Dorsolateral prefrontal cortex (tissue), 120 donors: ENCODE measurements at regions of chr22 and their contacts with region 1.

Region 1: DNA sequence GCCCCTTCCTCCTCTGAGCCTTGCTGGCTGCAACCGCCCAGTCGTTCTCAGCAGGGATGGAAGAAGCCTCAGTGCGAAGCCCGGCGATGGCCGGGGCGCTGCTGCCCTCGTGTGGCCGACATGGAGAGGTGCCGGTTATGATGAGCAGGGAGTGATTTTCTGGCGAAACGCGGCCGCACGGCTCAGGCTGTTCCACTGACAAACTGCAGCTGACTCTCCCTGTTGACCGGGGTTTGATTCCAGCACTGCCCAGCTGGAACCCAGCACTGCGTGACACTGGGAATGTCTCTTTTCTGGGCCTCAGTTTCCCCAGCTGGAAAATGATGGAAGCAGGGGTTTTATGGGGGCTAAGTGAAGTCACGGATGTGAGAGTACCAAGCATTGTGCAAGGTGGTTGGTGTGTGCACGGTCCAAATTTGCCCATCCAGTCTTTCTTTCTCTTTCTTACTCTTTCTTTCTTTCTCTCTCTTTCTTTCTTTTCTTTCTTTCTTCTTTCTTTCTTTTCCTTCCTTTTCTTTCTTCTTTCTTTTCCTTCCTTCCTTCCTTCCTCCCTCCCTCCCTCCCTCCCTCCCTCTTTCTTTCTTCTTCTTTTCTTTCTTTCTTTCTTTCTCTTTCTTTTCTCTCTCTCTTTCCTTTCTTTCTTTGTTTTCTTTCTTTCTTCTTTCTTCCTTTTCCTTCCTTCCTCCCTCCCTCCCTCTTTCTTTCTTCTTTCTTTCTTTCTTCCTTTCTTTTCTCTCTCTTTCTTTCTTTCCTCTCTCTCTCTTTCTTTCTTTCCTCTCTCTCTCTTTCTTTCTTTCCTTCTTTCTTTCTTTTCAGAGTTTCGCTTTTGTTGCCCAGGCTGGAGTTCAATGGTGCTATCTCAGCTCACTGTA is 25.8 kb upstream of the MPPED1 start:
- DNase-seq: peak; percentile 60 to 89 (median 78)
- H3K4me3 ChIP-seq: peak overlapping the region in 40 of 59 donors; percentile 1 to 54 (median 26)
- H3K27ac ChIP-seq: peak overlapping the region in 1 of 59 donors; percentile 44
- H3K27me3 ChIP-seq: peaks cover 0 to 21% (median 0%) of the 10 kb centered on the region in 45 donors
- CTCF ChIP-seq: peak; percentile 76 to 98 (median 92)

Region 2: DNA sequence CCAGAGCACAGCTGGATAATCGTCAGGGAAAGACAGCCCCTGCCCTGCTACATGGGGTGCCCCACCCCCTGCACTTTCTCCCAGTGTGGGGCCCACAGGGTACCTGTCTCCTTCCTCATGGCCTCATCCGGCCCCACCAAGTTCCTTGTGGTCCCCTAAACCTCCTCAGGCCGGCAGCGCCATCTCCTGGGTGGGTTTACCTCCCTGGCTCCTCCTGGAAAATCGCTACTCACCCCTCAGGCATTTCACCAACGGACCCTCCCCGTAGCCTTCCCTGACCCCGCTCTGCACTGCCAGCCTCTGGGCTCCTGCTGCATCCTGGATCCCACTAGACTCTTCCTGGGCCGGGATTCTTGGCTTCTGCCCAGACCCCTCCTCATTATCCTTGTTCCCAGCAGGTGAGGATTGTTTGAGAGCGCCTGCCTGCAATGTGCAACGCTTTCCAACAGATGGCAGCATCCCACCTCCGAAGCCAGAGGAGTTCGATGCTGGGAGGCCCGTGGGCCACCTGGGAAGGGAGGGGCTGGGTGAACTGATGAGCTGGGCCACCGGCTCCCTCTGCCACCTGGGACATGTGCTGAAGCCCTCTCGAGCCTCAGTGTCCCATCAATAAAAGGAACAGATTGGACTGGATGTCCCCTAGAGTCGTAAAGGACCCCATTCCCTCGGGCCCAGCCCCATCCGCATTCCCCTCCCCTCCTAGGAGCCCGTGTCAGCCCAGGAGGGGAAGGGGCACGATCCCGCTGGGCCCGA is 154.9 kb before region 1 on chr22:
- intact Hi-C with region 1: loop called in 1 of 2 experiments (anchors 5 kb)
- DNase-seq: peak in 9 of 10 donors; percentile 31 to 67 (median 49)
- H3K4me3 ChIP-seq: no peak overlapping the region
- H3K27ac ChIP-seq: no peak overlapping the region
- H3K27me3 ChIP-seq: no peaks in the 10 kb centered on the region
- CTCF ChIP-seq: peak; percentile 47 to 91 (median 83)

Region 3: DNA sequence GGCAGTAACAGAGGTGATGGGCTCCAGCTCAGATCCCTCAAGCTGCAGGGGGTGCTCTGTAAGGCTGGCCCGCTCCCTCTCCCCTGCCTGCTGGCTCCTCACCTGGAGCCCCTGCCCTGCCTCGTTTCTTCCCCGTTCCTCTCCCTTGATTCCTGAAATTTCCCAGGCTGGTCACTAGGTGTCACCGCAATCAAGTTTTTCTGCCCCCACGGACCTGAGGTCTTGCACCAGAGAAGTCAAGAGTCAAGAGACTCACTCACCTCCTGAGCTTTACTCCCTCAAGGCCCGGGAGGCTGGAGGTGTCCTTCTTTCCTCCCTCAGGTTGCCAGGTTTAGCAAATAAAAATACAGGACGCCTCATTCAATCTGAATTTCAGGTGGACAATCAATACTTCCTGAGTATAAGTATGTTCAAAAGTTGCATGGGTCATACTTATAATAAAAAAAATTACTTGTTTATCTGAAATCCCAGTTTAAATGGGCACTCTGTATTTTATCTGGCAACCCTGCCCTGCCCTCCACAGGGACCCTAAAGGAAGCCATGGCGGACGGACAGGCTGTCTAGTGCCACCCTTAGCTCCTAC is 112.0 kb before region 1 on chr22:
- intact Hi-C with region 1: loop called (anchors 2 kb)
- DNase-seq: peak in 5 of 10 donors; percentile 10 to 58 (median 26)
- H3K4me3 ChIP-seq: no peak overlapping the region
- H3K27ac ChIP-seq: no peak overlapping the region
- H3K27me3 ChIP-seq: peaks cover 0 to 6% (median 0%) of the 10 kb centered on the region in 45 donors
- CTCF ChIP-seq: peak; percentile 37 to 81 (median 71)

Region 4: DNA sequence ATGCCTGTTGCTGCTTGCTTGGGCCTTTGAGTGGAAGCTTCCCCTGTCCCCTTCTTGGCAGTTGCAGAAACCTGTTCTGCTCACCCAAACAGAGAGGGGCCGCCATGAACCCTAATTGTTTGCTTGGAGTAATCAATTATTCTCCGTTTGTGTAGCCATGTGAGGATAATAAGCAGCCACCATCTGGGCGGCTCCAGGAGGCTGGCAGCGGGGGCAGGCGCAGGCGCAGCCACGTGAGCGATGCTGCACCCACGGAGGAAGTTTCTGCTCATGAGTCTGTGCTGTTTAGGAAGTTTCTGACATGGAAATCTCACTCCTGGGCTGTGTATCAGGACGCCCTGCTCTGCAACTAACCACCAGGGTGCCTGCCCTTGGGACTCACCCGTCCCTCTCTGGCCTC is 115.9 kb after region 1 on chr22:
- intact Hi-C with region 1: no loop called
- DNase-seq: peak in 6 of 10 donors; percentile 49 to 75 (median 68)
- H3K4me3 ChIP-seq: no peak overlapping the region
- H3K27ac ChIP-seq: peak overlapping the region in 39 of 59 donors; percentile 10 to 79 (median 57)
- H3K27me3 ChIP-seq: no peaks in the 10 kb centered on the region
- CTCF ChIP-seq: no peak

Region 5: DNA sequence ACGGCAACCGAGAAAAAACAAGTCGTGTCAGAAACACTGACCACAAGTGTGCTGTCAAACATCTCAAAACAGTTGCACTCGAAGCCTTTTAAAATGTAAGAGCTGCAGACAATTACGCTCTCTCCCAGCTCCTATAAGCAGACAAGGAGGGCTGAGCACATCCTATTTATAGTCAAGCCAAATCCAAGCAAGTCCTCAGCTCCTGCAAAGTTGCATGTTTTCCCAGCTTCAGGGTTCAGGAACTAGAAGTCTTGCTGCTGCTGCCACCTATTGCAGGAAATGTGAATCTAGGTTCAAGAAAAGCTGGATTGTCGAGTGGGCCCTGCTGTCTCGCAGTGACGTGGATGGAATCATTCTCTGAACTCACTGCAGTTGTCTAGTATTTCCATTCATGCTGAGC is 410.6 kb after region 1 on chr22:
- intact Hi-C with region 1: loop called in 1 of 2 experiments (anchors 5 kb)
- DNase-seq: peak in 5 of 10 donors; percentile 10 to 73 (median 51)
- H3K4me3 ChIP-seq: no peak overlapping the region
- H3K27ac ChIP-seq: peak overlapping the region in 44 of 59 donors; percentile 7 to 84 (median 66)
- H3K27me3 ChIP-seq: no peaks in the 10 kb centered on the region
- CTCF ChIP-seq: peak in 55 of 56 donors; percentile 15 to 71 (median 59)

Region 6: GRCh38 chr22:43826142-43827002 is 440.4 kb after region 1 on chr22:
- intact Hi-C with region 1: loop called in 1 of 2 experiments (anchors 2 kb)
- DNase-seq: peak in 2 of 10 donors; percentile 63 to 67
- H3K4me3 ChIP-seq: peak overlapping the region in 6 of 59 donors; percentile 0 to 15 (median 4)
- H3K27ac ChIP-seq: peak overlapping the region in 53 of 59 donors; percentile 1 to 92 (median 72)
- H3K27me3 ChIP-seq: peaks cover 0 to 24% (median 0%) of the 10 kb centered on the region in 45 donors
- CTCF ChIP-seq: peak in 53 of 56 donors; percentile 26 to 68 (median 53)